Left ventricle myocardium inferior (tissue), 1 donor: ENCODE measurements at regions of chr1 and their contacts with region 1.

Region 1: GRCh38 chr1:86833461-86834215 is 80.3 kb downstream of the SELENOF start:
- DNase-seq: peak; percentile 50
- H3K4me3 ChIP-seq: no peak overlapping the region
- H3K27ac ChIP-seq: no peak overlapping the region
- H3K4me1 ChIP-seq: no peaks in the 10 kb centered on the region
- H3K27me3 ChIP-seq: no peaks in the 10 kb centered on the region
- CTCF ChIP-seq: peak; percentile 75

Region 2: DNA sequence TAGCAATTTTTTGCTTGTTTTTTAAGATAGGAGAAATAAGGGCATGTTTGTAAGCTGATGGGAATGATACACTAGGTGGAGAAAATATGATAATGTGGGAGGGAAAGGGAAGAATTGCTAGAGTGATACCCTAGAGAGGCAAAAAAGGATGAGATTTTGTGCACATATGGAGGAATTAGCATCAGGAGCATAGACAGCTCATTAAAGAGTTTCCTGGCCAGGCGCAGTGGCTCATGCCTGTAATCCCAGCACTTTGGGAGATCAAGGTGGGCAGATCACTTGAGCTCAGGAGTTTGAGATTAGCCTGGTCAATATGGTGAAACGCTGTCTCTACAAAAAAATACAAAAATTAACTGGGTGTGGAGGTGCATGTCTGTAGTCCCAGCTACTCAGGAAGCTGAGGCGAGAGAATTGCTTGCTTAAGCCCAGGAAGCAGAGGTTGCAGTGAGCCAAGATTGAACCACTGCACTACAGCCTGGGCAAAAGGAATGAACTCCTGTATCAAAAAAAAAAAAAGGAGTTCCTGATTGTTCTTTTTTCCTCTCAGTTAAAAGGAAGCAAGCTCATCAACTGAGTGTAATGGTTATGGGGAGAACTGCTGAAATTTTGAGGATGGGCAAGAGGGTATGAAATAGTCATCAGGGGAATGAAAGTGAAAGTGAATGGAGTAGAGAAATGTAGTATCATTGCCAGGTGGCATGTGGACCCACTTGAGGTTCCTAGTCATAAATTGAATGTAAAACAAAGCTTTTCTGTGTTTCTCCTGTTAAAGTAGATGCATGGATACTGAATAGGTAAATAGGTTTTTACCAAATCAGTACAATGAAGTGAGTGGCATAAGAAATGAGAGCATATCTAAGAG is 93.8 kb before region 1 on chr1:
- intact Hi-C with region 1: no loop called
- DNase-seq: no peak
- H3K4me3 ChIP-seq: no peak overlapping the region
- H3K27ac ChIP-seq: peak overlapping the region; percentile 26
- H3K4me1 ChIP-seq: peaks cover 24% of the 10 kb centered on the region
- H3K27me3 ChIP-seq: no peaks in the 10 kb centered on the region
- CTCF ChIP-seq: no peak

Region 3: DNA sequence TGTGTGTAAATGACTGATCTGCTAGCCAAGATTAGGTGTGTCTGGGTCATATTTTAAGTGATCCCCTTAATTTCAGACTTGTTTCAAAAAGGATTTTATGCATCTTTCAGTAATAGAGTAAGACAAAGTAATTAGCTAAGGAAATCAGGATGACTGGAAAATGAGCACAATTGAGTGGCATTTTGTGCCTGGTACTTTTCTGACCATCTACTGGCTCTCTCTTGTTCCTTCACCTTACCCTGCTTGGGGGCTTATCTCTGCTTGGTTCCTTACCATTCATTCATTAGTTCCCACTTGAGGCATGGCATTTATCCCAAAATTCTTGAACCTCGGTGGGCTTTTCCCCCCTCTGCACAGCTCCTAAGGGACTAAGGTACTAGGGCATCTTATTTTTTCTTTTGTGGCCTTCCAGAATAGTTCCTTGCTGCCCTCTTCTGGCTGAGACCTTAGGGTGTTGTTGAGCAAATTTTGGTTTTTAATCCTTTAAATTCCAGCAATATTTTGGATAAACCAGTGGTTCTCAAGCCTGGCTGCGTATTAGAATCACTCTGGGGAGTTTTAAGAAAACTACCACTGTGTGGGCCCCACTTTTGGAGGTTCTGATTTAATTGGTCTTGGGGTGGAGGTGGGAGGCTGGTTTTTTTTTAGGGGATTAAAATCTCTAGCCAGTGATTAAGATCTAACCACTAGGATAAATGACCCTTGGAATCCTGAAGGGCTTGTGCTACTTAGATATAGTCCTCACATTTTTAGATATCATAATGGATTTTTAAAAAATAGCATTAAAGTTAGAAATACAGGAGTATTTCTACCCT is 131.6 kb after region 1 on chr1:
- intact Hi-C with region 1: loop called (anchors 2 kb)
- DNase-seq: no peak
- H3K4me3 ChIP-seq: no peak overlapping the region
- H3K27ac ChIP-seq: no peak overlapping the region
- H3K4me1 ChIP-seq: no peaks in the 10 kb centered on the region
- H3K27me3 ChIP-seq: no peaks in the 10 kb centered on the region
- CTCF ChIP-seq: peak; percentile 74

Region 4: GRCh38 chr1:87084244-87084836 is 250.7 kb after region 1 on chr1:
- intact Hi-C with region 1: loop called (anchors 5 kb)
- DNase-seq: no peak
- H3K4me3 ChIP-seq: no peak overlapping the region
- H3K27ac ChIP-seq: no peak overlapping the region
- H3K4me1 ChIP-seq: peaks cover 8% of the 10 kb centered on the region
- H3K27me3 ChIP-seq: no peaks in the 10 kb centered on the region
- CTCF ChIP-seq: peak; percentile 78

Region 5: DNA sequence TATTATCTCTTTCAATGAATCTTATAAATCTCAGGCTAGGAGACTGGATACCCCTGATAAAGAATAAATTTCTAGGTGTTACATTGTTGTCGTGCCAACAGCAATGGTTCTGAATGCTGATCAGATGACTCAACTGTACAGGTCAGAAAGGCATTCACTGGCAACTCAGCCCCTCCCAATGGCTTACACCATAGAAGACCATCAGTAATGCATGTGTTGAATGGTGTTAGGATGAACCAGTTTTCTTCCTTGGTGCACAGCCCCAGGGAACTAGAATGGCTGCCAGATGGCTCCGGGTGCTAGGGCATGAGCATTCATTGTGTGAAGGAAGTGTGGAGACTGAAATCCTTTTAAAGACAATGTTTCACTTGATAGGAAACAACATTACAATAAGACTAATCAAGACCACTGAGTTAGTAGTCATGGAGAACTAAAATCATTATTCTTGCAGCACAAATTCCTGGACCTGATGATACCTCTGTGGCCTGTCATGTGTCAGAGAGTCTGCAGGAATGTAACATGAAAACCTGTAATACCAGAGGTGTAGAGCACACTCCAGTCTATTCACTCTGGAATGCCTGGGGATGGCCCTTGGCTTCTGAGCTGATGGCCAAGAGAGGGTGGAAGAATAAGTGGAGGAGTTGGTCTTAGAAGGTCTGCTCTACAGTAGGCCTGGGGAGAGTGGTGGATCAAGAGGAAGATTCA is 307.4 kb after region 1 on chr1:
- intact Hi-C with region 1: no loop called
- DNase-seq: no peak
- H3K4me3 ChIP-seq: no peak overlapping the region
- H3K27ac ChIP-seq: no peak overlapping the region
- H3K4me1 ChIP-seq: peaks cover 5% of the 10 kb centered on the region
- H3K27me3 ChIP-seq: no peaks in the 10 kb centered on the region
- CTCF ChIP-seq: no peak